Activated CD4-positive, alpha-beta memory T cell treated with anti-CD3 and anti-CD28 coated beads, Interleukin-2, amount 10 ng/mL, durations not matched to agents 7 days and 5 days (primary cell): ENCODE measurements at regions of chr17 and their contacts with region 1.

Region 1: DNA sequence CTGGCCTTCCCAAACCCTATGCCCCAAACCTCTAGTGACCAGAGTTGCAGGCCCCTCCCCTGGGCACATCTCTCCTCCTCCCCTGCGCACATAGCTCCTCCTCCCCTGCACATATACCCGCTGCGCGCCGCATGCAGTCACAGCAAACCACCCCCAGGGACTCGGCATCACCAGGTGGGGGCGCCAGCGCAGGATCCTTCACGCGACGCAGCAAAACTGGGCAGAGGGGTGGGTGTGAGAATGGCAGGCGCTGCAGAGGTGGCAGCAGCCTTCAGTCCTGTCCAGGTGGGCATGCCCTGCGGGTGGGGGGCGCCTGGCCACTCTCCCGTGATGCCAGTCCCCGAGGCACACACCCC is 5.6 kb downstream of the CORO6 start:
- DNase-seq: peak; percentile 96
- H3K4me3 Mint-ChIP-seq: peak overlapping the region; percentile 75
- H3K27ac Mint-ChIP-seq: peak overlapping the region; percentile 96
- H3K4me1 Mint-ChIP-seq: peaks cover 55% of the 10 kb centered on the region
- H3K27me3 Mint-ChIP-seq: peaks cover 23% of the 10 kb centered on the region

Region 2: GRCh38 chr17:29412780-29413565 is 204.1 kb before region 1 on chr17:
- CTCF ChIA-PET with region 1: no interaction called
- POLR2A ChIA-PET with region 1: no interaction called
- DNase-seq: no peak
- H3K4me3 Mint-ChIP-seq: no peak overlapping the region
- H3K27ac Mint-ChIP-seq: no peak overlapping the region
- H3K4me1 Mint-ChIP-seq: peaks cover 11% of the 10 kb centered on the region
- H3K27me3 Mint-ChIP-seq: no peaks in the 10 kb centered on the region

Region 3: DNA sequence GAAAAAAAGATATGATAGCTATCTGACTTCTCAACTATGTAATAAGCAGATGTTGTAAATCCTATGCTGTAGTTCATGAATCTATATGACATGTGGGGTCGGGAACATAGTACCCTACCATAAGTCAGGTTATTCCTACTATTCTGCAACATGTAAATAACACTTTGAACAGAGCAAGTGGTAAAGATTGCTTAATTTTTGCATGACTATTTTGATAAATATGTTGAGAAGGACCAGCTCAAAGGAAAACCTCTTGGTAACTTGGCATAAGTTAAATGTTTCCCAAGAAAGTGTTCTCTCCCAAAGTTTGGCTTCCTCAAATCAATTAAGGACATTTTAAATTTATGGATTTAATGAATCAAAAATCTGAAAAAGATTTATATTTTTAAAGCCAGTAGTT is 112.4 kb before region 1 on chr17:
- CTCF ChIA-PET with region 1: no interaction called
- POLR2A ChIA-PET with region 1: no interaction called
- DNase-seq: no peak
- H3K4me3 Mint-ChIP-seq: no peak overlapping the region
- H3K27ac Mint-ChIP-seq: no peak overlapping the region
- H3K4me1 Mint-ChIP-seq: no peaks in the 10 kb centered on the region
- H3K27me3 Mint-ChIP-seq: no peaks in the 10 kb centered on the region

Region 4: DNA sequence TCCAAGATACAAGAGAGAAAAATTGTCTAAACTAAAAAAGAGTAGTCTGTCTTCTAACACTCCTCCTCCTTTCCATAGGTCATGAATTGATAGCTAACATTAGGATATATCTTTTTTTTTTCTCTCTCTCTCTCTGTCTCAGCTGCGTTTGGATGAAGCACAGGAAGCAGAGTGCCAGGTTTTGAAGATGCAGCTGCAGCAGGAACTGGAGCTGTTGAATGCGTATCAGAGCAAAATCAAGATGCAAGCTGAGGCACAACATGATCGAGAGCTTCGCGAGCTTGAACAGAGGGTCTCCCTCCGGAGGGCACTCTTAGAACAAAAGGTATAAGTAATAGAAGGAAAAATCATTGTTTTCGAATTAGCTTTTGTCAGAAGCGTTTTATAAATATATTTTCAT is 83.1 kb before region 1 on chr17:
- CTCF ChIA-PET with region 1: no interaction called
- POLR2A ChIA-PET with region 1: no interaction called
- DNase-seq: no peak
- H3K4me3 Mint-ChIP-seq: no peak overlapping the region
- H3K27ac Mint-ChIP-seq: no peak overlapping the region
- H3K4me1 Mint-ChIP-seq: no peaks in the 10 kb centered on the region
- H3K27me3 Mint-ChIP-seq: no peaks in the 10 kb centered on the region

Region 5: GRCh38 chr17:29549177-29549923 is 67.8 kb before region 1 on chr17:
- CTCF ChIA-PET with region 1: no interaction called
- POLR2A ChIA-PET with region 1: no interaction called
- DNase-seq: no peak
- H3K4me3 Mint-ChIP-seq: no peak overlapping the region
- H3K27ac Mint-ChIP-seq: no peak overlapping the region
- H3K4me1 Mint-ChIP-seq: peaks cover 24% of the 10 kb centered on the region
- H3K27me3 Mint-ChIP-seq: no peaks in the 10 kb centered on the region

Region 6: GRCh38 chr17:29568331-29569244 is 48.5 kb before region 1 on chr17 and contains the start of gene TP53I13:
- CTCF ChIA-PET with region 1: interaction called, 64 read pairs
- POLR2A ChIA-PET with region 1: interaction called, 107 read pairs
- DNase-seq: peak; percentile 91
- H3K4me3 Mint-ChIP-seq: peak within 1 kb of the TSS; percentile 92
- H3K27ac Mint-ChIP-seq: peak within 1 kb of the TSS; percentile 96
- H3K4me1 Mint-ChIP-seq: peaks cover 36% of the 10 kb centered on the region
- H3K27me3 Mint-ChIP-seq: no peaks in the 10 kb centered on the region
- total RNA-seq, gene TP53I13: 112 to 118 TPM

Region 7: DNA sequence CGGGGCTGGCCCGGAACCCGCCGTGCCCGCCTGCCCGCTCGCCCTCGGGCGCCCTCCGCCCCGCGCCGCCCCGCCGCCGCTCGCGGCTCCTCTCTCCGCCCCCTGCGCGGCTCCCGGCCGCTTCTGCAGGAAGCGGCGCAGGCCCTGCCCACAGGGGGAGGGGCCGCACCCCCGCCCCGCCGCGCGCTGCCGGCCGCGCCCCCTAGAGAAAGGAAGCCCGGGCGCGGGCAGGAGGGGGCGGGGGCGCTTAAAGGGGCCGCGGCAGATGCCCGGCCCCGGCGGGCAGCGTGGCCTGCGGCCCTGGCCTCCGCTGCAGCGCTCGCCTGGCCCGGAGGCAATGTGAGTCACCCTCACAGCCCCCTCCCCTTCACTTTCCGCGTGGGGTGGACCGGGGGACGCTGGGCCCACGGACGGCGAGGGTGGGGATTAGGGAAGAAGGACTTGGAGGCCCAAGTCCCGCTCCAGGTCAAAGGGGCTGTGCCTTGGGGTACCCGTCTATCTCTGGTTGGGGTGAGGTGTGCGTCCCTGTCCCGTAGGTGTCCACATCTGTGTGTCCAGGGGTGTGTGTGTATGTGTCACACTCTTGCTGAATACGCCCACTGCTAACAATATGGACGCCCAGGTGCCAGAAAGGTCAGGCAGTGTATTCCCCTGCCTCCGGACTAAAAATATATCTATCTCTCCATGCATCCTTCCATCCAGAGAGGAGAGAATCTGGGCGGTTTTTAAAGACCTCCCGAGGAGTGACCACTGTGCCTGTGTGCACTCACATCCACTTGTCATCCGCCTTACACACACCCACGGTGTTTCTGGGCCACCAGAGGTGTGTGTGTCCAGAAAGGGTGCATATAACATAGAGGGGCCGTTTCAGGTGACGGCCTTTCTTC is 27.3 kb before region 1 on chr17 and contains the start of gene GIT1:
- CTCF ChIA-PET with region 1: interaction called, 75 read pairs
- POLR2A ChIA-PET with region 1: interaction called, 89 read pairs
- DNase-seq: peak; percentile 88
- H3K4me3 Mint-ChIP-seq: peak within 1 kb of the TSS; percentile 97
- H3K27ac Mint-ChIP-seq: peak within 1 kb of the TSS; percentile 86
- H3K4me1 Mint-ChIP-seq: peaks cover 72% of the 10 kb centered on the region
- H3K27me3 Mint-ChIP-seq: no peaks in the 10 kb centered on the region
- total RNA-seq, gene GIT1: 76.6 to 80.4 TPM

Region 8: GRCh38 chr17:29640413-29640812 is 23.3 kb after region 1 on chr17:
- CTCF ChIA-PET with region 1: interaction called, 36 read pairs
- POLR2A ChIA-PET with region 1: interaction called, 24 read pairs
- DNase-seq: no peak
- H3K4me3 Mint-ChIP-seq: no peak overlapping the region
- H3K27ac Mint-ChIP-seq: no peak overlapping the region
- H3K4me1 Mint-ChIP-seq: peaks cover 19% of the 10 kb centered on the region
- H3K27me3 Mint-ChIP-seq: no peaks in the 10 kb centered on the region

Region 9: GRCh38 chr17:29760761-29761696 is 143.9 kb after region 1 on chr17:
- CTCF ChIA-PET with region 1: interaction called, 24 read pairs
- POLR2A ChIA-PET with region 1: interaction called, 39 read pairs
- DNase-seq: peak; percentile 95
- H3K4me3 Mint-ChIP-seq: peak overlapping the region; percentile 91
- H3K27ac Mint-ChIP-seq: peak overlapping the region; percentile 95
- H3K4me1 Mint-ChIP-seq: peaks cover 42% of the 10 kb centered on the region
- H3K27me3 Mint-ChIP-seq: no peaks in the 10 kb centered on the region